Left ventricle myocardium inferior (tissue), 1 donor: ENCODE measurements at regions of chr4 and their contacts with region 1.

Region 1: GRCh38 chr4:101730291-101731117 is 60.0 kb upstream of the BANK1 start:
- DNase-seq: peak; percentile 33
- H3K4me3 ChIP-seq: no peak overlapping the region
- H3K27ac ChIP-seq: no peak overlapping the region
- H3K4me1 ChIP-seq: no peaks in the 10 kb centered on the region
- H3K27me3 ChIP-seq: no peaks in the 10 kb centered on the region
- CTCF ChIP-seq: peak; percentile 79

Region 2: GRCh38 chr4:99998062-99998867 is 1732.2 kb before region 1 on chr4:
- intact Hi-C with region 1: loop called (anchors 10 kb)
- DNase-seq: no peak
- H3K4me3 ChIP-seq: no peak overlapping the region
- H3K27ac ChIP-seq: no peak overlapping the region
- H3K4me1 ChIP-seq: no peaks in the 10 kb centered on the region
- H3K27me3 ChIP-seq: peaks cover 5% of the 10 kb centered on the region
- CTCF ChIP-seq: peak; percentile 42

Region 3: DNA sequence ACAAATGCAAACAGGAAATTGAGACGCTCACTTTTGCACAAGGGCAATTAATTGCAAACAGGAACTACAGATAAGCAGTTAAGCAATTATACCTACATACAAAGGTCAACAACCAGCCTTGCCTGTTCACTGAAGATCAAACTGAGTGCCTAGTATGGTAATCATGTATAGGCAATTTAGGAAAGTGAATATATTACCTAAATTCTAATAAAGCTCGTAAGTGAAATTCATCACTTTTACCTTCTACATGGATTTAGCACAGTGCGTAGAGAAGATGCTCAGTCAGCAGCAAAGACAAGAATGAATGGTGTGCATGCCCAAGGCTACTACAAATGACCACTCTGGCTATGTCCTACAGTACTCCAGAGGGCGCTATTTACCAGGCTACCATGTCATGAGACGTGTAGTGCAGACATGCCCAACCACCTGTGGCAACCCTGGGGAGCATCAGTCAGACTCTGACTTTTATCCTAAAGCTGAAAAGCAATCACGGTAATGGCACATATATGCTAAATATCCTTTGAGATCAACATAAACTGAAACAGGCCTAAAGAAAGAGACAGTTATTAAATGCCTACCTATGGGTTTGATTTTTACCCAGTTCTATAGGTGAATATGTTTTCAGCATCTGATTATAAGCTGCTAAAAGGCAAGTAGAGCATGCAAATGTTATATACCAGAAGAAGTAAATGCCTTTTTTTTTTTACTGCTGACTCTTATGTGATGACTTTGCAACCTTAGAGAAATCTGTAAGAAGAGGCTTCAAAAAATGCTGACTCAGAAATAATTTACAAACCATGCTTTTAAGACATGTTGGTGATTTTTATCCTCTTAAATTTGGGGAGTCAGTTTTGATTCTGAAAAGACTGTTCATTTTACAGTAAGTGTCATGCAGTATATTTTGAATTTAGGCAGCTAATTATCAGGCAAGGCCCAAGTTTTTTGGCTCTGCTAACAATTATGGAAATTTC is 561.2 kb before region 1 on chr4:
- intact Hi-C with region 1: loop called (anchors 5 kb)
- DNase-seq: peak; percentile 35
- H3K4me3 ChIP-seq: no peak overlapping the region
- H3K27ac ChIP-seq: no peak overlapping the region
- H3K4me1 ChIP-seq: peaks cover 7% of the 10 kb centered on the region
- H3K27me3 ChIP-seq: no peaks in the 10 kb centered on the region
- CTCF ChIP-seq: peak; percentile 87